CD8-positive, alpha-beta T cell (primary cell): ENCODE measurements at regions of chr22 and their contacts with region 1.

Region 1: DNA sequence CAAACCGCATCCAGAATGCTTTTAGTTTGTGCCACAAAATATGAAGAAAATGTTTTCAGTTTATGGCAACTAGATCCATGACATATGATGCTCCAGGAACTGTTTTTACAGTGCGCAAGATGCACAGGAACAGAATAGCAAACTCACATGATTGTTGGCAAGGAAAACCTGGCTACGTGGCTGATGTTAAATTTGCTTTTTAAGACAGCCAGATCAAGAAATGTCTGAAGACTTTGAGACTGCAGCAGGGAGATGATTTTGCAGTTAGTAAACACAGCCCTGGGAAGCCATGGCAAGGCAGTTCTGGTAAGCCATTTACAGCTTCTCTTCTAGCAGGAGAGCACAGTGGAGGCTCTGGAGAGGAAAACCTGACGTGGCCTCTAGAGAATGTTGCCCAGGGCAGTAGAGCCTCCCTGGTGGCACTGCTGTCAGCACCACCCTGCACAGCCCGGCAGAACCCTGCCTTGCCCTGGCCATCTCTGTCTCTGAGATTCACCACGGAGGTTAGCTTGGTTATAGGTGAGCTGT is 69.8 kb upstream of the TNRC6B start:
- DNase-seq: peak in 2 of 9 experiments; percentile 12 to 26
- ATAC-seq: peak; percentile 41
- H3K4me3 ChIP-seq: peak overlapping the region; percentile 10 to 13
- H3K4me3 Mint-ChIP-seq: peak overlapping the region; percentile 79
- H3K27ac ChIP-seq: peak overlapping the region in 1 of 2 experiments; percentile 55
- H3K27ac Mint-ChIP-seq: peak overlapping the region; percentile 76
- H3K4me1 ChIP-seq: peaks cover 67% of the 10 kb centered on the region
- H3K4me1 Mint-ChIP-seq: peaks cover 87% of the 10 kb centered on the region
- H3K27me3 ChIP-seq: no peaks in the 10 kb centered on the region
- H3K27me3 Mint-ChIP-seq: no peaks in the 10 kb centered on the region
- CTCF ChIP-seq: no peak

Region 2: DNA sequence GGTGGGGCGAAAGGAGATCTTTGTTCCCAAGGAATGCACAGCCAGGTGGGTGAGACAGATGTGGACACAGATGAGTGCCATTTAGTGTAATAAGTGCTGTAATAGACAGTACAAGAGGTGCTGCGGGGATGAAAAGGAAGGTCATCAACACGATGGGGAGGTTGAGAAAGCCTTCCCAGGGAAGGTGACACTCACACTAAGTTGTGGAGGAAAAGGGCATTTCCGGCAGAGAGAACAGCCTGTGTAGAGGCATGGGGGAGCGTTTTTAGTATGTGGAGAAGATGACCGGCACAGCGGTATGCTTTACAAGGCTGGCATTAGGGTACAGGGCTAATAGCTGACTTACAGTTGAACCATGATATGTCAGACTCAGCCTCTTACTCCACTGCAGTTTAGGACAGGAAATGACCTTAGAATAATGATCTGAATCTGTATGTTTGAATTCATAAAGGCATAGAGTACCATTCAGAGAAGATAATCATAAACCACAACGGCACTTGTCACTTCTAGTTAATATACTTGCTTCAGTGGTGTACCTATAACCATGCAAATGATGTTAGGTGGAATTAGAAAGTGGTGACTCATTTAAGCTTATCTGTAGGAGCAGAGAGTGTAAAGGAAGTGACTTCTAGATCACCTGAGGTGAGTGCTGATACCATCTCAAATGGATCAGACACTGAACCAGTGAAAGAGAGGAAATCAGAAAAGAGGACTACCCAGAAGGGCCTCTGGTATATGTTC is 52.6 kb before region 1 on chr22:
- CTCF ChIA-PET with region 1: no interaction called
- POLR2A ChIA-PET with region 1: no interaction called
- intact Hi-C with region 1: loop called in 1 of 2 experiments (anchors 5 kb)
- DNase-seq: peak in 2 of 9 experiments; percentile 57 to 71
- ATAC-seq: peak; percentile 91
- H3K4me3 ChIP-seq: no peak overlapping the region
- H3K4me3 Mint-ChIP-seq: peak overlapping the region; percentile 53
- H3K27ac ChIP-seq: peak overlapping the region; percentile 16 to 70
- H3K27ac Mint-ChIP-seq: peak overlapping the region; percentile 86
- H3K4me1 ChIP-seq: peaks cover 83% of the 10 kb centered on the region
- H3K4me1 Mint-ChIP-seq: peaks cover 76% of the 10 kb centered on the region
- H3K27me3 ChIP-seq: no peaks in the 10 kb centered on the region
- H3K27me3 Mint-ChIP-seq: no peaks in the 10 kb centered on the region
- CTCF ChIP-seq: no peak

Region 3: DNA sequence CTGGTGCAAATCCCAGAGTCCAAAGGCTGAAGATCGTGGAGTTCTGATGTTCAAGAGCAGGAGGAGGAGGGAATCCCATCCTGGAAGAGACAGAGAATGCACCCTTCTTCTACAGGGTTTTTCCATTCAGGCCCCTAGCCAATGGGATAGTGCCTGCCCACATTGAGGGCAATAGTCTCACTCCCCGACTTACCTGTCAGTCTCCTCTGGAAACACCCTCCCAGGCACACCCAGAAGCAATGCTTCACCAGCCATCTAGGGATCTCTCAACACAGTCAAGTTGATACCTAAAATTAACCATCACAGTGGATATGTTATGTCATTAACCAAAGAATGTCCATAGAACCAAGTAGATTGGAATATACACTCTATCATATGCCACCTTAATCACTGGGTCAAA is 40.3 kb before region 1 on chr22:
- CTCF ChIA-PET with region 1: no interaction called
- POLR2A ChIA-PET with region 1: interaction called, 3 read pairs
- intact Hi-C with region 1: loop called in 1 of 2 experiments (anchors 5 kb)
- DNase-seq: no peak
- ATAC-seq: no peak
- H3K4me3 ChIP-seq: no peak overlapping the region
- H3K4me3 Mint-ChIP-seq: no peak overlapping the region
- H3K27ac ChIP-seq: no peak overlapping the region
- H3K27ac Mint-ChIP-seq: no peak overlapping the region
- H3K4me1 ChIP-seq: peaks cover 56% of the 10 kb centered on the region
- H3K4me1 Mint-ChIP-seq: peaks cover 82% of the 10 kb centered on the region
- H3K27me3 ChIP-seq: no peaks in the 10 kb centered on the region
- H3K27me3 Mint-ChIP-seq: no peaks in the 10 kb centered on the region
- CTCF ChIP-seq: no peak

Region 4: GRCh38 chr22:40220316-40221054 is 112.6 kb after region 1 on chr22:
- CTCF ChIA-PET with region 1: no interaction called
- POLR2A ChIA-PET with region 1: no interaction called
- intact Hi-C with region 1: no loop called
- DNase-seq: peak in 1 of 9 experiments; percentile 13
- ATAC-seq: no peak
- H3K4me3 ChIP-seq: no peak overlapping the region
- H3K4me3 Mint-ChIP-seq: no peak overlapping the region
- H3K27ac ChIP-seq: no peak overlapping the region
- H3K27ac Mint-ChIP-seq: peak overlapping the region; percentile 94
- H3K4me1 ChIP-seq: peaks cover 83% of the 10 kb centered on the region
- H3K4me1 Mint-ChIP-seq: peaks cover 83% of the 10 kb centered on the region
- H3K27me3 ChIP-seq: no peaks in the 10 kb centered on the region
- H3K27me3 Mint-ChIP-seq: no peaks in the 10 kb centered on the region
- CTCF ChIP-seq: no peak